CD4-positive, alpha-beta memory T cell (primary cell): ENCODE measurements at regions of chr7 and their contacts with region 1.

Region 1: GRCh38 chr7:129218514-129219062 is 6.2 kb upstream of the AHCYL2 start:
- DNase-seq: peak; percentile 72 to 80 (median 75)
- H3K4me3 ChIP-seq: no peak overlapping the region
- H3K4me3 Mint-ChIP-seq: no peak overlapping the region
- H3K27ac ChIP-seq: no peak overlapping the region
- H3K27ac Mint-ChIP-seq: peak overlapping the region in 2 of 7 donors; percentile 48 to 60
- H3K4me1 ChIP-seq: peaks cover 14% of the 10 kb centered on the region
- H3K4me1 Mint-ChIP-seq: peaks cover 8 to 11% (median 10%) of the 10 kb centered on the region in 4 donors
- H3K27me3 ChIP-seq: no peaks in the 10 kb centered on the region
- H3K27me3 Mint-ChIP-seq: peaks cover 2 to 6% of the 10 kb centered on the region in 2 donors

Region 2: GRCh38 chr7:129240119-129240815 is 21.7 kb after region 1 on chr7:
- CTCF ChIA-PET with region 1: interaction called, 95 read pairs
- POLR2A ChIA-PET with region 1: no interaction called
- intact Hi-C with region 1: no loop called
- DNase-seq: no peak
- H3K4me3 ChIP-seq: no peak overlapping the region
- H3K4me3 Mint-ChIP-seq: no peak overlapping the region
- H3K27ac ChIP-seq: no peak overlapping the region
- H3K27ac Mint-ChIP-seq: peak overlapping the region in 2 of 7 donors; percentile 3 to 29
- H3K4me1 ChIP-seq: no peaks in the 10 kb centered on the region
- H3K4me1 Mint-ChIP-seq: peaks cover 13 to 19% (median 14%) of the 10 kb centered on the region in 4 donors
- H3K27me3 ChIP-seq: no peaks in the 10 kb centered on the region
- H3K27me3 Mint-ChIP-seq: no peaks in the 10 kb centered on the region

Region 3: GRCh38 chr7:129264534-129264933 is 45.9 kb after region 1 on chr7:
- CTCF ChIA-PET with region 1: interaction called, 358 read pairs
- POLR2A ChIA-PET with region 1: no interaction called
- intact Hi-C with region 1: no loop called
- DNase-seq: no peak
- H3K4me3 ChIP-seq: no peak overlapping the region
- H3K4me3 Mint-ChIP-seq: no peak overlapping the region
- H3K27ac ChIP-seq: no peak overlapping the region
- H3K27ac Mint-ChIP-seq: no peak overlapping the region
- H3K4me1 ChIP-seq: peaks cover 17% of the 10 kb centered on the region
- H3K4me1 Mint-ChIP-seq: peaks cover 14 to 20% (median 16%) of the 10 kb centered on the region in 4 donors
- H3K27me3 ChIP-seq: no peaks in the 10 kb centered on the region
- H3K27me3 Mint-ChIP-seq: no peaks in the 10 kb centered on the region

Region 4: GRCh38 chr7:129279762-129280161 is 61.2 kb after region 1 on chr7:
- CTCF ChIA-PET with region 1: interaction called, 358 read pairs
- POLR2A ChIA-PET with region 1: no interaction called
- intact Hi-C with region 1: no loop called
- DNase-seq: no peak
- H3K4me3 ChIP-seq: no peak overlapping the region
- H3K4me3 Mint-ChIP-seq: no peak overlapping the region
- H3K27ac ChIP-seq: no peak overlapping the region
- H3K27ac Mint-ChIP-seq: no peak overlapping the region
- H3K4me1 ChIP-seq: no peaks in the 10 kb centered on the region
- H3K4me1 Mint-ChIP-seq: peaks cover 0 to 7% (median 2%) of the 10 kb centered on the region in 4 donors
- H3K27me3 ChIP-seq: no peaks in the 10 kb centered on the region
- H3K27me3 Mint-ChIP-seq: no peaks in the 10 kb centered on the region

Region 5: GRCh38 chr7:129298268-129298893 is 79.8 kb after region 1 on chr7:
- CTCF ChIA-PET with region 1: interaction called, 153 read pairs
- POLR2A ChIA-PET with region 1: interaction called, 3 read pairs
- intact Hi-C with region 1: loop called (anchors 1 kb)
- DNase-seq: peak in 4 of 5 donors; percentile 22 to 45 (median 32)
- H3K4me3 ChIP-seq: no peak overlapping the region
- H3K4me3 Mint-ChIP-seq: no peak overlapping the region
- H3K27ac ChIP-seq: no peak overlapping the region
- H3K27ac Mint-ChIP-seq: peak overlapping the region in 1 of 7 donors; percentile 61
- H3K4me1 ChIP-seq: no peaks in the 10 kb centered on the region
- H3K4me1 Mint-ChIP-seq: peaks cover 0 to 1% (median 0%) of the 10 kb centered on the region in 4 donors
- H3K27me3 ChIP-seq: no peaks in the 10 kb centered on the region
- H3K27me3 Mint-ChIP-seq: no peaks in the 10 kb centered on the region

Region 6: GRCh38 chr7:129468087-129468486 is 249.5 kb after region 1 on chr7:
- CTCF ChIA-PET with region 1: interaction called, 22 read pairs
- POLR2A ChIA-PET with region 1: no interaction called
- intact Hi-C with region 1: loop called (anchors 1 kb)
- DNase-seq: no peak
- H3K4me3 ChIP-seq: no peak overlapping the region
- H3K4me3 Mint-ChIP-seq: no peak overlapping the region
- H3K27ac ChIP-seq: no peak overlapping the region
- H3K27ac Mint-ChIP-seq: no peak overlapping the region
- H3K4me1 ChIP-seq: no peaks in the 10 kb centered on the region
- H3K4me1 Mint-ChIP-seq: no peaks in the 10 kb centered on the region
- H3K27me3 ChIP-seq: no peaks in the 10 kb centered on the region
- H3K27me3 Mint-ChIP-seq: no peaks in the 10 kb centered on the region